ENCODE measurements at regions of chr17 and their contacts with region 1.

Region 1: GRCh38 chr17:81435652-81436293 is 40.5 kb downstream of the BAHCC1 start:
- DNase-seq: no peak
- ATAC-seq: no peak
- H3K4me3 ChIP-seq: no peak overlapping the region
- H3K4me3 Mint-ChIP-seq: no peak overlapping the region
- H3K27ac ChIP-seq: no peak overlapping the region
- H3K27ac Mint-ChIP-seq: no peak overlapping the region
- H3K4me1 ChIP-seq: peaks cover 5% of the 10 kb centered on the region
- H3K4me1 Mint-ChIP-seq: peaks cover 4% of the 10 kb centered on the region
- H3K27me3 ChIP-seq: peaks cover 3 to 21% of the 10 kb centered on the region in 2 experiments
- H3K27me3 Mint-ChIP-seq: peaks cover 4% of the 10 kb centered on the region
- CTCF ChIP-seq: no peak

Region 2: DNA sequence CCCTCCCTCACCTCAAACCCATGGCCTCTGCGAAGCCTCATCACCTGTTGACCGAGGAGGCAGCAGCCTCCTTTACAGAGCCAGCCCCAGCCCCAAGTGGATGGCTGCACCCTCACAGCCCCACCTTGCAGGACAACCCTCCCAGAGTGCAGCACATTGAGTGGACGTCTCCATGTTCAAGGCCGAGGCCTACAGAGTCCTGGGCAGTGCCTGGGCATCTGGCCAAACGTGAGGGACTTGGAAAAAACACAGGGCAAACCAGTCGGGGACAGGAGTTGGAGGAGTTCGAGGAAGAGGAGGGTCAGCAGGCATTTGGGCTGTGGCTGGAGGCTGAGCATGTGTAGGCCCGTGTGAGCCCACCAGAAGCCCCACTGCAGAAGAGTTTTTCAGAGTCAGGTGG is 37.2 kb after region 1 on chr17:
- CTCF ChIA-PET with region 1: no interaction called
- POLR2A ChIA-PET with region 1: no interaction called
- intact Hi-C with region 1: loop called in 1 of 2 experiments (anchors 1 kb)
- DNase-seq: no peak
- ATAC-seq: no peak
- H3K4me3 ChIP-seq: no peak overlapping the region
- H3K4me3 Mint-ChIP-seq: no peak overlapping the region
- H3K27ac ChIP-seq: no peak overlapping the region
- H3K27ac Mint-ChIP-seq: no peak overlapping the region
- H3K4me1 ChIP-seq: no peaks in the 10 kb centered on the region
- H3K4me1 Mint-ChIP-seq: no peaks in the 10 kb centered on the region
- H3K27me3 ChIP-seq: no peaks in the 10 kb centered on the region
- H3K27me3 Mint-ChIP-seq: peaks cover under 1% of the 10 kb centered on the region
- CTCF ChIP-seq: no peak